ENCODE measurements at regions of chr1 and their contacts with region 1.

Region 1: GRCh38 chr1:184915463-184916090 is 58.7 kb downstream of the NIBAN1 start:
- DNase-seq: no peak
- ATAC-seq: no peak
- H3K4me3 Mint-ChIP-seq: no peak overlapping the region
- H3K27ac Mint-ChIP-seq: no peak overlapping the region
- H3K4me1 Mint-ChIP-seq: peaks cover 48% of the 10 kb centered on the region
- H3K27me3 Mint-ChIP-seq: no peaks in the 10 kb centered on the region
- CTCF ChIP-seq: no peak

Region 2: GRCh38 chr1:184866991-184867788 is 48.4 kb before region 1 on chr1:
- CTCF ChIA-PET with region 1: no interaction called
- POLR2A ChIA-PET with region 1: interaction called, 5 read pairs
- intact Hi-C with region 1: loop called (anchors 5 kb)
- DNase-seq: no peak
- ATAC-seq: peak; percentile 93
- H3K4me3 Mint-ChIP-seq: peak overlapping the region; percentile 26
- H3K27ac Mint-ChIP-seq: peak overlapping the region; percentile 77
- H3K4me1 Mint-ChIP-seq: peaks cover 34% of the 10 kb centered on the region
- H3K27me3 Mint-ChIP-seq: no peaks in the 10 kb centered on the region
- CTCF ChIP-seq: no peak

Region 3: GRCh38 chr1:184945029-184945428 is 29.5 kb after region 1 on chr1:
- CTCF ChIA-PET with region 1: no interaction called
- POLR2A ChIA-PET with region 1: interaction called, 9 read pairs
- intact Hi-C with region 1: loop called (anchors 2 kb)
- DNase-seq: no peak
- ATAC-seq: peak; percentile 62
- H3K4me3 Mint-ChIP-seq: no peak overlapping the region
- H3K27ac Mint-ChIP-seq: no peak overlapping the region
- H3K4me1 Mint-ChIP-seq: peaks cover 50% of the 10 kb centered on the region
- H3K27me3 Mint-ChIP-seq: no peaks in the 10 kb centered on the region
- CTCF ChIP-seq: no peak

Measured in activated B cell treated with CpG ODN at 0.5 μM for 24 hours (primary cell).